Body of pancreas (tissue), 4 donors: ENCODE measurements at regions of chr6 and their contacts with region 1.

Region 1: DNA sequence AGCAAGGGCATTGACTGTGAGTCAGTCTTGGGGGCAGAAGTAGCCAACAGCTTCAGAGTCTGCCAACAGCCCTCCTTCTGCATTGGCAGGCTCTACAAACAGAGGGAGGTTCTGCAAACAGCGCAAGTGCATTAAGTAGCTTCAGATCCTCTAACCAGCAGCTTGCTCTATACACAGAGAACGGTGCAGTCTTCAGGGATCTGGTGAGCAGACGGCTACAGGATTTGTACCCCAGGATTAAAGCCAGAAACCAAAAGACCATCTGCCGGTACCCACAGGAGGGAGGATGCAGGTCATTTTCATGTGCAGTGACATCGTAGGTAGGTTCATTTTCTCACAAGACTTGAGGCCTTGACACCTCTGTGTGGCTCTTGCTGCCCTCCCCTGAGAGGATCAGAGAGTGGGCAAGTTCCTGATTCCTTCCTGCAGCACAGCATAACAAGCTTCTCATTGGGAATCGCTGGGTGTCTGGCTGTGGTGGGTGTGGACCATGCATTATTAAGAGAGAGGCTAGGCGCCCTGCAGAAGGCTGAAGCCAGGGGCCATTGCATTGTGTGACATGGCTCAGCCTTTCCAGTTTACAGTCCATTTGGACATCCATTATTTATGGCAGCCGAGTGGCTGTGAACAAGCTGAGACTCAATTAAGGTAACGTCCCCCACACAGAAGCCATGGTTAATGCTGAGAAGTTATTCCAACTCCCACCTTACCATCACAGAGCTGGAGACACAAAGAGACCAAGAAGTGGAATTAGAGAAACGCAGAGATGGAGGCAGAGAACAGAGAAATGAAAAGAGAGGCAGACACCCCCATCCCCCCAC is 250.0 kb downstream of the LRFN2 start:
- DNase-seq: no peak
- ATAC-seq: no peak
- H3K4me3 ChIP-seq: no peak overlapping the region
- H3K27ac ChIP-seq: no peak overlapping the region
- H3K4me1 ChIP-seq: peaks cover 1% of the 10 kb centered on the region
- H3K27me3 ChIP-seq: no peaks in the 10 kb centered on the region
- CTCF ChIP-seq: no peak
- POLR2A ChIP-seq: no peak

Region 2: GRCh38 chr6:40587240-40588069 is 250.3 kb after region 1 on chr6 and contains the start of gene LRFN2:
- intact Hi-C with region 1: loop called (anchors 10 kb)
- DNase-seq: peak; percentile 78 to 84 (median 84)
- ATAC-seq: peak; percentile 97
- H3K4me3 ChIP-seq: peak within 1 kb of the TSS; percentile 31 to 36
- H3K27ac ChIP-seq: peak within 1 kb of the TSS; percentile 70 to 88 (median 84)
- H3K4me1 ChIP-seq: peaks cover 22% of the 10 kb centered on the region
- H3K27me3 ChIP-seq: no peaks in the 10 kb centered on the region
- CTCF ChIP-seq: peak; percentile 32 to 77 (median 64)
- POLR2A ChIP-seq: peak in 1 of 3 donors; percentile 21
- total RNA-seq, gene LRFN2: 0.33 TPM in 1 of 2 donors, not detected in the other